ENCODE measurements at regions of chr11 and their contacts with region 1.

Region 1: GRCh38 chr11:119262668-119263351 is 54.1 kb downstream of the MCAM start:
- DNase-seq: no peak
- H3K4me3 Mint-ChIP-seq: no peak overlapping the region
- H3K27ac Mint-ChIP-seq: no peak overlapping the region
- H3K4me1 Mint-ChIP-seq: peaks cover 53% of the 10 kb centered on the region
- H3K27me3 Mint-ChIP-seq: no peaks in the 10 kb centered on the region

Region 2: GRCh38 chr11:119205574-119206510 is 57.0 kb before region 1 on chr11 and contains the start of gene CBL:
- CTCF ChIA-PET with region 1: interaction called, 12 read pairs
- DNase-seq: peak; percentile 97
- H3K4me3 Mint-ChIP-seq: peak within 1 kb of the TSS; percentile 86
- H3K27ac Mint-ChIP-seq: peak within 1 kb of the TSS; percentile 88
- H3K4me1 Mint-ChIP-seq: peaks cover 31% of the 10 kb centered on the region
- H3K27me3 Mint-ChIP-seq: peaks cover 4% of the 10 kb centered on the region

Region 3: GRCh38 chr11:119284344-119285157 is 21.7 kb after region 1 on chr11:
- CTCF ChIA-PET with region 1: interaction called, 22 read pairs
- DNase-seq: peak; percentile 27
- H3K4me3 Mint-ChIP-seq: no peak overlapping the region
- H3K27ac Mint-ChIP-seq: peak overlapping the region; percentile 12
- H3K4me1 Mint-ChIP-seq: peaks cover 23% of the 10 kb centered on the region
- H3K27me3 Mint-ChIP-seq: no peaks in the 10 kb centered on the region